ENCODE measurements at regions of chr1 and their contacts with region 1.

Region 1: GRCh38 chr1:36397378-36398230 is at the start of gene LSM10:
- DNase-seq: peak; percentile 85 to 94 (median 86)
- H3K4me3 ChIP-seq: peak within 1 kb of the TSS; percentile 90 to 97
- H3K4me3 Mint-ChIP-seq: peak within 1 kb of the TSS; percentile 95 to 99 (median 98)
- H3K27ac ChIP-seq: peak within 1 kb of the TSS; percentile 90
- H3K27ac Mint-ChIP-seq: peak within 1 kb of the TSS; percentile 89 to 100 (median 98)
- H3K4me1 ChIP-seq: peaks cover 20% of the 10 kb centered on the region
- H3K4me1 Mint-ChIP-seq: peaks cover 13 to 41% (median 26%) of the 10 kb centered on the region in 4 donors
- H3K27me3 ChIP-seq: no peaks in the 10 kb centered on the region
- H3K27me3 Mint-ChIP-seq: no peaks in the 10 kb centered on the region
- total RNA-seq, gene LSM10: 51.0 to 53.0 TPM

Region 2: GRCh38 chr1:36323597-36324352 is 73.8 kb before region 1 on chr1 and contains the start of gene EVA1B:
- CTCF ChIA-PET with region 1: no interaction called
- POLR2A ChIA-PET with region 1: interaction called, 3 read pairs
- intact Hi-C with region 1: loop called (anchors 1 kb)
- DNase-seq: peak; percentile 26 to 54 (median 31)
- H3K4me3 ChIP-seq: peak within 1 kb of the TSS; percentile 47 to 73
- H3K4me3 Mint-ChIP-seq: peak within 1 kb of the TSS; percentile 80 to 84 (median 83)
- H3K27ac ChIP-seq: peak within 1 kb of the TSS; percentile 35
- H3K27ac Mint-ChIP-seq: peak within 1 kb of the TSS in 6 of 7 donors; percentile 63 to 84 (median 76)
- H3K4me1 ChIP-seq: peaks cover 28% of the 10 kb centered on the region
- H3K4me1 Mint-ChIP-seq: peaks cover 18 to 28% (median 24%) of the 10 kb centered on the region in 4 donors
- H3K27me3 ChIP-seq: no peaks in the 10 kb centered on the region
- H3K27me3 Mint-ChIP-seq: no peaks in the 10 kb centered on the region
- total RNA-seq, gene EVA1B: 6.3 to 7.3 TPM

Region 3: DNA sequence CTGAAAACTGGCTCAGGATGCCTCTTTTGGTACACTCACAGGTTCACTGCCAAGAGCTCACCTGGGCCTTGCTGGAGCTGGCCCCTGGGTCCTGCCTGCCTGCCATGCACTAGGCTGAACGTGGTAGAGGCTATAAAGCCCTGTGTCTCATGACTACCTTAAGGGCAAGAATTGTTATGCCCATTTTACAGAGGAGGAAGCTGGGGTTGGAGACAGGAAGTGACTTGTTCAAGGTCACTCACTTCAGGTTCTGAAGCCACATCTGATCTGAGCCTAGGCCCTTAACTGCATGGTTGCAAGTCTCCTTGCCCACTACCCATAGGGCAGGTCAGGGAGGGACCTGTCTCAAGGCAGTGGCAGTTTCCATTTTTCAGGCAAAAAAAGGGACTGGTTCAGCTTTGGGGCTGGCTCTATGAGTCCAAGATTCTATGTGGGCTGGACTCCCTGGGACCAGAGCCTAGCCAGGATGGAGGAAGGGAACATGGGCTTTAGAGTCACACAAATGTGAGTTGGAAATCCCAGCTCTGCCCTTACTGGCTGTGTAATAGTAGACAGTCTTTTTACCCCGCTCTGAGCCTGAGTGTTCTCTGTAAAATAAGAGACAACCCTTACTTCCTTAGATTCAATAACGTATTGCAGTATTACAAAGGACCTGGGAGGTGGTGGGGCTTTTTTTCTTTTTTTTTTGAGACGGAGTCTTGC is 19.7 kb before region 1 on chr1:
- CTCF ChIA-PET with region 1: interaction called, 4 read pairs
- POLR2A ChIA-PET with region 1: interaction called, 15 read pairs
- intact Hi-C with region 1: no loop called
- DNase-seq: no peak
- H3K4me3 ChIP-seq: no peak overlapping the region
- H3K4me3 Mint-ChIP-seq: peak overlapping the region in 7 of 8 donors; percentile 6 to 65 (median 47)
- H3K27ac ChIP-seq: peak overlapping the region; percentile 41
- H3K27ac Mint-ChIP-seq: peak overlapping the region; percentile 80 to 94 (median 86)
- H3K4me1 ChIP-seq: peaks cover 92% of the 10 kb centered on the region
- H3K4me1 Mint-ChIP-seq: peaks cover 53 to 91% (median 71%) of the 10 kb centered on the region in 4 donors
- H3K27me3 ChIP-seq: no peaks in the 10 kb centered on the region
- H3K27me3 Mint-ChIP-seq: no peaks in the 10 kb centered on the region

Region 4: GRCh38 chr1:36420836-36421664 is 23.4 kb after region 1 on chr1:
- CTCF ChIA-PET with region 1: interaction called, 4 read pairs
- POLR2A ChIA-PET with region 1: interaction called, 6 read pairs
- intact Hi-C with region 1: loop called (anchors 1 kb)
- DNase-seq: peak; percentile 83 to 88 (median 86)
- H3K4me3 ChIP-seq: no peak overlapping the region
- H3K4me3 Mint-ChIP-seq: peak overlapping the region; percentile 49 to 84 (median 74)
- H3K27ac ChIP-seq: peak overlapping the region; percentile 30
- H3K27ac Mint-ChIP-seq: peak overlapping the region; percentile 82 to 97 (median 94)
- H3K4me1 ChIP-seq: peaks cover 21% of the 10 kb centered on the region
- H3K4me1 Mint-ChIP-seq: peaks cover 19 to 29% (median 22%) of the 10 kb centered on the region in 4 donors
- H3K27me3 ChIP-seq: no peaks in the 10 kb centered on the region
- H3K27me3 Mint-ChIP-seq: no peaks in the 10 kb centered on the region

Region 5: DNA sequence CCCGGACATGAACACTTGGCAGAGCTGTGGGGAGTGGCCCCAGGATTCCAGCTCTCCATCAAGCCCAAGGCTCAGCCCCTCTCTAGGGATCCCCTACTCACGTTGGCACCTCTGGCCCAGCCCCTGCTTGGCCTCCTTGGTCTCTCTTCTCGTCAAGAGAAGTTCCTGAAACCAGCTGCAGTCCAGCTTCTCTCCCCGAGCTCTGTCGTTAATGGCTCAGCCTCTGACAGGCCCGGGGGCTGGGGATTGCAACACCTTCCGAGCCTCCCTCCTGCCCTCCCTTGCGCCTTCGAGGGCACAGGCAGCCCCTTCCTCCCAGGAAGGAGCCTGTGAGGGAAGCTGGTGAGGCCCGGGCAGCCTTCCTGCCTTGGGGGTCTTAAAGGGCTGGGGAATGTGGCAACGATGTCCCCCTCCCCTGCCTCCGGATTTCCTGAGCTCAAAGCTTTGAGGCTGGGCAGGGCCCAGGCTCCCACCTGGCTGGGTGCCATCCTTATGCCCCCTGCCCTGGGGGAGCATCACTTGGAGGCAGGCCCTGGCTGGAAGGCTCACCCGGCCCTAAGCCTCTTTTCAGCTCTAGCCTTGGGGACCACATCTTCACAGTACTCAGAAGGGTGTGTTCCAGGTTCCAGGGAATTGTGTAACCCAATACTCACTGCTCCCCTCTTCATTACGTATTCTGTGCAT is 85.2 kb after region 1 on chr1 and contains the start of gene CSF3R:
- CTCF ChIA-PET with region 1: no interaction called
- POLR2A ChIA-PET with region 1: no interaction called
- intact Hi-C with region 1: no loop called
- DNase-seq: no peak
- H3K4me3 ChIP-seq: no peak within 1 kb of the TSS
- H3K4me3 Mint-ChIP-seq: peak within 1 kb of the TSS; percentile 3 to 80 (median 62)
- H3K27ac ChIP-seq: no peak within 1 kb of the TSS
- H3K27ac Mint-ChIP-seq: peak within 1 kb of the TSS in 5 of 7 donors; percentile 42 to 83 (median 62)
- H3K4me1 ChIP-seq: no peaks in the 10 kb centered on the region
- H3K4me1 Mint-ChIP-seq: peaks cover 0 to 8% (median 5%) of the 10 kb centered on the region in 4 donors
- H3K27me3 ChIP-seq: no peaks in the 10 kb centered on the region
- H3K27me3 Mint-ChIP-seq: peaks cover 3 to 4% of the 10 kb centered on the region in 2 donors
- total RNA-seq, gene CSF3R: 0.61 to 0.87 TPM

Region 6: GRCh38 chr1:36807262-36807661 is 409.7 kb after region 1 on chr1:
- CTCF ChIA-PET with region 1: no interaction called
- POLR2A ChIA-PET with region 1: no interaction called
- intact Hi-C with region 1: no loop called
- DNase-seq: no peak
- H3K4me3 ChIP-seq: no peak overlapping the region
- H3K4me3 Mint-ChIP-seq: no peak overlapping the region
- H3K27ac ChIP-seq: no peak overlapping the region
- H3K27ac Mint-ChIP-seq: no peak overlapping the region
- H3K4me1 ChIP-seq: no peaks in the 10 kb centered on the region
- H3K4me1 Mint-ChIP-seq: no peaks in the 10 kb centered on the region
- H3K27me3 ChIP-seq: no peaks in the 10 kb centered on the region
- H3K27me3 Mint-ChIP-seq: peaks cover 4 to 12% of the 10 kb centered on the region in 2 donors